ENCODE measurements at regions of chr1 and their contacts with region 1.

Region 1: GRCh38 chr1:193569096-193569982 is 382.9 kb upstream of the B3GALT2 start:
- DNase-seq: no peak
- H3K4me3 Mint-ChIP-seq: no peak overlapping the region
- H3K27ac Mint-ChIP-seq: peak overlapping the region; percentile 77
- H3K4me1 Mint-ChIP-seq: peaks cover 33% of the 10 kb centered on the region
- H3K27me3 Mint-ChIP-seq: no peaks in the 10 kb centered on the region

Region 2: DNA sequence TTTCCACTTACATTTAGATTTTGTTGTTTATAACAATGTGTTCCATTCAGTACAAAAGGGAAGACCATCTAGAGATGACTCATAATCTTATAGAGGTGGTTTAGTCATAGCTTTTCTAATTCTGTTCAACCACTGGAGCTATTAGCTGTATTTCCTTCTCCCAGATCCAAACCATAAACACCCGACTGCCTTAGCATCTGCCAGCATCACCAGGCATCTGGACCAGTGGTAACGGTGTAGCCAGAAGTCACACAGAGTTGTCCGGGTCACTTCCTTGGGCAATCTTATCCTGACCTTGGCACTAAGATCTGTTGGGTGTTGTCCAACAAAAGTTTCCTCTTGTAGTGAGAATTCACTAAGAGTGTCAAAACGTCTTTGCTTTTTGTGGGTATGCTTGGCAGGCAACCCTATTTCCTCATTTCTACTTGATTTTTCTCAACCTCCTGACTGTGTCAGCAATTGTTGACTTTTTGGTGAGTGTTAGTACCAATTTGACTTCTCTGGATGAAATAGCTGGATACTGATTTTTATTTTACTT is 10.8 kb before region 1 on chr1:
- intact Hi-C with region 1: loop called (anchors 1 kb)
- DNase-seq: no peak
- H3K4me3 Mint-ChIP-seq: no peak overlapping the region
- H3K27ac Mint-ChIP-seq: peak overlapping the region; percentile 70
- H3K4me1 Mint-ChIP-seq: peaks cover 18% of the 10 kb centered on the region
- H3K27me3 Mint-ChIP-seq: no peaks in the 10 kb centered on the region

Measured in activated T-helper 2 cell treated with anti-CD3 and anti-CD28 coated beads, Interferon-gamma antibody, Interleukin-2, Interleukin-4, amounts not matched to agents 10 μg/mL and 5 μg/mL and 100 μg/mL, durations not matched to agents 14 hours and 24 hours and 36 hours (primary cell).